Activated T-helper 2 cell treated with anti-CD3 and anti-CD28 coated beads, Interferon-gamma antibody, Interleukin-2, Interleukin-4, amounts not matched to agents 10 μg/mL and 5 μg/mL and 100 μg/mL, durations not matched to agents 14 hours and 24 hours and 36 hours (primary cell): ENCODE measurements at regions of chr12 and their contacts with region 1.

Region 1: DNA sequence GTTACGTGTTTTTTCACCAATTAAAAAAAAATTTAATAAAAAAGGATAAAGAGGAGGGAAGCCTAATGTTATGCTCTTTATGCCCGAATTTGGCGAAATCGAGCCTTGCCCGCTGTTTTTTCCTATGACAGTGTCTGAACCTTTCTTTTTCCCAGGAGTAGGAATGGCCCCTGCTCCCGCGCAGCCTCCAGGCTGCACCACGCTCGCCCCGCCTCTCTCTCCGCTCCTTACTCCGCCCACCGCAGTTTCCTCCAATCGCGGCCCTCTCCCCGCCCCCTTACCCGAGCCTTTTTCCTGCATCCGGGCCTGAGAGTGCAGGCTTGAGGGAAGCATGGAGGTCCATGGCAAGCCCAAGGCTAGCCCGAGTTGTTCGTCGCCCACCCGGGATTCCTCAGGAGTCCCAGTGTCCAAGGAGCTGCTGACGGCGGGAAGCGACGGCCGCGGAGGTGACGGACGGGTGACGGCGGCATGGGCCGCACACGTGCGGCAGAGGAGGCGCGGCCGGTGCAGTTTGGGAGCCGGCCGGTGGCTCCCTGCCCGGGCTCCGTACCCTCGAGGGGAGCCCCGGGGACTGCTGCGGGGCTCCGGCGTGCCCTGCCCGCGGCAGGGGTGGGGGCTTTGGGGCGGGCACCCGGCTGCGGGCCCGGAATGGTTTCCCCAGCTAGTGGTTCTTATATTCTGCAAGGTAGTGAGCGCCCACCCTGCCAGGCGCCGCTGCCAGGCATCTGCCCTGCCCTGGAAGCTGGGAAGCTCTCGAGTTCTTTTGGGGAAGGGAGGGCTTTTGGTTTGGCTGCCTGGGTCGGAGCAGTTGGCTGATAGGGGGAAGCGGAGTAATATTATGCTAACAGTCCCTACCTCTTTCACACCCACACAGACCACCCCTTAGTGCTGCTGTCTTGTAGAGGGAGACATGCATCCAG is at the start of gene NOPCHAP1:
- DNase-seq: peak; percentile 81
- H3K4me3 Mint-ChIP-seq: peak within 1 kb of the TSS; percentile 88
- H3K27ac Mint-ChIP-seq: peak within 1 kb of the TSS; percentile 69
- H3K4me1 Mint-ChIP-seq: peaks cover 35% of the 10 kb centered on the region
- H3K27me3 Mint-ChIP-seq: peaks cover 9% of the 10 kb centered on the region
- total RNA-seq, gene NOPCHAP1: 25.2 and 29.6 TPM in 2 replicates

Region 2: GRCh38 chr12:104958009-104958945 is 28.0 kb before region 1 on chr12 and contains the start of gene SLC41A2:
- intact Hi-C with region 1: loop called (anchors 1 kb)
- DNase-seq: peak; percentile 65
- H3K4me3 Mint-ChIP-seq: peak within 1 kb of the TSS; percentile 87
- H3K27ac Mint-ChIP-seq: peak within 1 kb of the TSS; percentile 88
- H3K4me1 Mint-ChIP-seq: peaks cover 23% of the 10 kb centered on the region
- H3K27me3 Mint-ChIP-seq: peaks cover 46% of the 10 kb centered on the region
- total RNA-seq, gene SLC41A2: 4.3 and 8.2 TPM in 2 replicates

Region 3: GRCh38 chr12:105030820-105031807 is 44.8 kb after region 1 on chr12:
- intact Hi-C with region 1: loop called (anchors 5 kb)
- DNase-seq: no peak
- H3K4me3 Mint-ChIP-seq: no peak overlapping the region
- H3K27ac Mint-ChIP-seq: peak overlapping the region; percentile 13
- H3K4me1 Mint-ChIP-seq: peaks cover 30% of the 10 kb centered on the region
- H3K27me3 Mint-ChIP-seq: no peaks in the 10 kb centered on the region